A549 (cell line): ENCODE measurements at regions of chr6 and their contacts with region 1.

Region 1: GRCh38 chr6:129667034-129667433 is 42.9 kb downstream of the ARHGAP18 start:
- DNase-seq: no peak
- ATAC-seq: peak in 1 of 2 experiments; percentile 41; a peak in 1 of 6 replicates
- H3K4me3 ChIP-seq: no peak overlapping the region
- H3K27ac ChIP-seq: peak overlapping the region; percentile 63 to 71
- H3K4me1 ChIP-seq: peaks cover 62% of the 10 kb centered on the region
- CTCF ChIP-seq: peak; percentile 36; the same call in 2 of the 3 replicates
- EP300 ChIP-seq: no peak
- POLR2A ChIP-seq: no peak
- RAD21 ChIP-seq: peak; percentile 51 to 71

Region 2: GRCh38 chr6:129598244-129599187 is 68.5 kb before region 1 on chr6:
- CTCF ChIA-PET with region 1: interaction called, 12 read pairs
- POLR2A ChIA-PET with region 1: no interaction called
- DNase-seq: peak; percentile 35 to 76
- ATAC-seq: peak; percentile 81 to 82
- H3K4me3 ChIP-seq: no peak overlapping the region
- H3K27ac ChIP-seq: peak overlapping the region; percentile 61 to 78
- H3K4me1 ChIP-seq: peaks cover 16% of the 10 kb centered on the region
- CTCF ChIP-seq: peak; percentile 84
- EP300 ChIP-seq: no peak
- POLR2A ChIP-seq: no peak
- RAD21 ChIP-seq: peak; percentile 92 to 93